GM10248 (cell line): ENCODE measurements at regions of chr4 and their contacts with region 1.

Region 1: DNA sequence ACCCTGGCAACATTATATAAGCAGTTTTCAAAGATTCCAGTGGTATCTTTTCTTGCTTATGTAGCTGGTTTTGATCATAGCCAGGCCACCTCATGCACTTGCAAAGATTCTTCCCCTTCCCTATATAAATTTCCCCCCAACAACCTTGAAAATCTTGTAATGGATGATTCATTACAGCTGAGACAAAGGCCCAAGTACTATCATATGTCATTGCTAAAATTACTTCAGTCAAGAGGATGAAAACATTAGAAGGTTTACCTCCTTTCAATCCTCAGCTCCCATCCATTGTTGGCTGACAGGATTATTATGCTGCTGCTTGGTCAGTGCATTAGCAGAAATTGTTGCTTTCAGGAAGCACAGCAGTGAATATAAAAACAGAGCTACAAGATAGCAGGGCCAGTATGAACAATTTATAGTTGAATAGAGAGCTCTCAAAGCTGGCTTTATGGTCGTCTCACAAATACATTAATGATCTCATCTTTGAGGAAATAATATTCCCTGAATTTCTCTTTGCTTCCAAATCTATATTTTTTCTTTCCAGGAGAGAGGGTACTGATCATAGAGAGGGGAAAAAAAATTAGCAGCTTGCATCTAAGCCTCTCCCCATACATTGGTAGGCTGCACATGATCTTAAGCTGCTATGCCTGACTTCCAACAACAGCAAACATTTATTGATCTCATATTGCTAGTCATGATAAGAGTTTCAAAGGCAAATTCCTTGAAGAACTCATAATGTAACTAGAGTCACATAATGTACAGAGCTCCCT is 7.7 kb upstream of the ARHGEF38 start:
- DNase-seq: no peak
- CTCF ChIP-seq: no peak

Region 2: GRCh38 chr4:105560421-105560848 is 15.7 kb after region 1 on chr4:
- CTCF ChIA-PET with region 1: interaction called, 15 read pairs
- POLR2A ChIA-PET with region 1: no interaction called
- DNase-seq: no peak
- CTCF ChIP-seq: no peak